PC-9 (cell line): ENCODE measurements at regions of chr17 and their contacts with region 1.

Region 1: DNA sequence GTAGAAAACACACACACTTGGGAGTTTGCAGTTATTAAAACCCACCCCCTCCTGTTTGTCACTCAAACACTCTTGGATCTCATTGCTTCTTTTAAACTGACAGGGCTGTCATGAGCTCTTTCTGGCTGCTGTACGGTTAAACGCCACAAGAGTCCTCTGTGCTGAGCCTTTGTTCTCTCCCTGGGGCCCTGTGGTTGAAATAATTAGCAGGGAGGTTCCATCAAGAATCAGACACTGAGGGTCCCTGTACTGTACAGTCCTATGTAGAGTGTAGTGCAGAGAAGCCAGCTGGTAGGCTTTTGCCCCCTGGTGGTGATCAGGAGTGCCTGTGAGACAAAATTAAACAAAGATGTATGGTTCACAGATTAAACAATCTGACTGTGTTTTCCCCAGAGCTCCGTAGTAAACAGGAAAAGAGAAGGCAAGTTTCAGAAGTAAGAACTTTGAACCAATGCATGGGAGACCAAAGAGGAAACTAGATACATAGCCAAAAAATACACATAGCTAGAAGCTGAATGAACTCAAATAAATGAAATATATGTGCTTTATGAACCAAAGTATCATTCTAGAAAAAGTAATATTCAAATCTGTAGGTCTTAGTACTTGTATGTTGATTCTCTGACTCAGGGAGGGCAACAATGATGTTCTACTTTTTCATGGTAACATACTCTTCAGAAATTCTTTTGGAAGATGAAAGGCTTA is 1.4 kb upstream of the SSH2 start:
- DNase-seq: peak; percentile 53 to 68
- H3K4me3 ChIP-seq: peak overlapping the region; percentile 73; the same call in 1 of the 2 replicates
- H3K27ac ChIP-seq: no peak overlapping the region
- H3K4me1 ChIP-seq: peaks cover 32% of the 10 kb centered on the region
- H3K27me3 ChIP-seq: no peaks in the 10 kb centered on the region
- CTCF ChIP-seq: peak; percentile 95

Region 2: DNA sequence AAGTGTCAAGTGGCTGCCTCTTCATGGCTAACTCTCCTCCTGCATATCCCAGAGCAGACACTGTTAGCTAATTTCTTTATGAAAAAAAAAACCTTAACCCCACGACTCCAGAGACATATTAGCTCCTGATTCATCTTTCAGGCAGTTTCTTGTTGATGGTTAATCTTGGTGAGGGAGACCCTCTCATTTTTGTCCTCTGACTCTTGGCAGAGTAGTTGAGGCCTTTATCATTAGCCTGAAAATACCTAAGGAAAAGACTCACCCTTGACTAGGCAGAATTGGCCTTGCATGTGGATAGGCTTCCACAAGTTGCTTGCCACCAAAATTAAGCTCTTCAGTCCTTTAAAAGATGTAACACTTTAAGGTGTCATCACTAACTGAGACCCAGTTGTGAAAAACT is 680.7 kb before region 1 on chr17:
- CTCF ChIA-PET with region 1: no interaction called
- POLR2A ChIA-PET with region 1: interaction called, 36 read pairs
- intact Hi-C with region 1: no loop called
- DNase-seq: no peak
- H3K4me3 ChIP-seq: no peak overlapping the region
- H3K27ac ChIP-seq: no peak overlapping the region
- H3K4me1 ChIP-seq: peaks cover 15% of the 10 kb centered on the region
- H3K27me3 ChIP-seq: no peaks in the 10 kb centered on the region
- CTCF ChIP-seq: no peak

Region 3: GRCh38 chr17:29789196-29790170 is 141.9 kb before region 1 on chr17:
- CTCF ChIA-PET with region 1: interaction called, 5 read pairs
- POLR2A ChIA-PET with region 1: interaction called, 4 read pairs
- intact Hi-C with region 1: loop called (anchors 1 kb)
- DNase-seq: peak in 1 of 2 experiments; percentile 39
- H3K4me3 ChIP-seq: no peak overlapping the region
- H3K27ac ChIP-seq: no peak overlapping the region
- H3K4me1 ChIP-seq: peaks cover 19% of the 10 kb centered on the region
- H3K27me3 ChIP-seq: no peaks in the 10 kb centered on the region
- CTCF ChIP-seq: no peak

Region 4: GRCh38 chr17:29867643-29868181 is 63.7 kb before region 1 on chr17:
- CTCF ChIA-PET with region 1: interaction called, 12 read pairs
- POLR2A ChIA-PET with region 1: no interaction called
- intact Hi-C with region 1: no loop called
- DNase-seq: no peak
- H3K4me3 ChIP-seq: no peak overlapping the region
- H3K27ac ChIP-seq: no peak overlapping the region
- H3K4me1 ChIP-seq: no peaks in the 10 kb centered on the region
- H3K27me3 ChIP-seq: no peaks in the 10 kb centered on the region
- CTCF ChIP-seq: peak; percentile 46

Region 5: DNA sequence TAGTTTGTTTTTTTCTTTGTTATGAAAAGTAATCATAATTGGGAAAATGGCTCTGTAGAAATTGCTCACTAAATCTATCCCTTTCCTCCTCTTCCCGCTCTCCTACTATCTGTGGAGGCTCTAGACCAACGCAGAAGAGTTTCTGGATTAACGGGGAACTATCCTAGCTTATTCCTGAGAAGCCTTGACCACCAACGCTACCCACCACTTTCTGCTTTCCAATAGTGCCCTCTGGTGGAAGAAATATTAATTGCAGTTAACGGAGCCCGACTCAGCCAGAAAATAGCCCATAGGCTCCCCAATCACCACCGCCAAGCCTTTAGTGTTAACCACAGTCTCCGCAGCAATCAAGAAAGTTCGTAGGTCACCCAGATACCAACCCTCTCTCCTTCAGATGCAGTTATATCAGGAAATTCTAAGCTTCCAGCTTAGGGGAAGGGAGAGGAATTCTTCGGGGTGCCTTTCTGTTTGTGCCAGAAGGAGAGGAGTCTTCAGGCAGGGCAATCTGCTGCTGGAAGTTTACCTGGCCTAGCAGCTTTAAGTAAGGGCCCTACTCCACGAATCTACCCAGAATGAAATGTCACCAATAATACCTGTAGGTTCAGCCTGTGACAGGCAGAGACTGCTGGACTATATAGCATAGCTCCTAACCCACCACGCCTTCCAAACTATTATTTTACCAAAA is 162.2 kb after region 1 on chr17:
- CTCF ChIA-PET with region 1: interaction called, 8 read pairs
- POLR2A ChIA-PET with region 1: no interaction called
- intact Hi-C with region 1: loop called (anchors 1 kb)
- DNase-seq: peak; percentile 40 to 56
- H3K4me3 ChIP-seq: no peak overlapping the region
- H3K27ac ChIP-seq: no peak overlapping the region
- H3K4me1 ChIP-seq: no peaks in the 10 kb centered on the region
- H3K27me3 ChIP-seq: 0 out of 2 replicates have a peak, but pooled peaks cover 5% of the 10 kb centered on the region
- CTCF ChIP-seq: peak; percentile 95